ENCODE measurements at regions of chr17 and their contacts with region 1.

Region 1: GRCh38 chr17:59427425-59427921 is 96.0 kb downstream of the YPEL2 start:
- DNase-seq: no peak
- H3K4me3 ChIP-seq: no peak overlapping the region
- H3K27ac ChIP-seq: peak overlapping the region; percentile 76 to 90 (median 85)
- H3K4me1 ChIP-seq: peaks cover 0 to 70% (median 67%) of the 10 kb centered on the region in 4 donors
- H3K27me3 ChIP-seq: no peaks in the 10 kb centered on the region
- CTCF ChIP-seq: no peak
- EP300 ChIP-seq: no peak
- POLR2A ChIP-seq: no peak

Region 2: DNA sequence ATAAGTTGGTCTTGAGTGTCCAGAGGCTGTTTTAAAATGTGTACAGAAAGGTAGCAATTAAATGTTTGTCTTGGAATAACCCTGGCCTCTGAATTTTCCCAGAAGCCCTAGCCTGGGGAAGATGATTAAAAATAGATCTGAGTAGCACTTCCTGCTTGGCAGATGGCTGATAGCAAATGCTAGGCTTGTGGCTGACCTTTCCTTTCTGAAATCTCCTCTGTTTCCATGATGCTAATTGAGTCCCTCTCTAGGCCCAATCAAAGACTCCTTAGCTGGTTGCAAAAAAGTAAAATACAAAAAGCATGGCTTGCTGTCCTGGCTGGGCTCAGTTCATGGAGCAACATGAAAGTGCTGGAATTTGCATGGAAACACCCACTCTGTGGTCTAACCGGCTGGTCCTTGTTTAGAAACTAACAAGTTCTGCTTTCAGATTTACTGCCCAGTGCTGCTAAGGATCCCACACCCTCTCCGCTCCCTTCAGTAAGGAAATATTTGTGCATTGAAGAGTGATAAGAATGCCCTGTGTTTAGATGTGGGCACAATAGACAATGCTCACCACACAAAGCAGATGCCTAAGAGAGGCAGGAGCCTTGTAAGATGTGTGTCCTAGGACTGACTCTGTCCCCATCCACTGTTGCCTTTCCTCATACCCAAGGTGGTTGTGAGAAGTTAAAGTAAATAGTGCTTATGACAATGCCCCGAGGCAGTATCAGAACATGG is 55.2 kb before region 1 on chr17:
- intact Hi-C with region 1: loop called (anchors 5 kb)
- DNase-seq: peak; percentile 86
- H3K4me3 ChIP-seq: peak overlapping the region in 1 of 4 donors; percentile 3
- H3K27ac ChIP-seq: peak overlapping the region; percentile 87 to 95 (median 92)
- H3K4me1 ChIP-seq: peaks cover 0 to 100% (median 96%) of the 10 kb centered on the region in 4 donors
- H3K27me3 ChIP-seq: no peaks in the 10 kb centered on the region
- CTCF ChIP-seq: no peak
- EP300 ChIP-seq: peak in 2 of 4 donors; percentile 49 to 53
- POLR2A ChIP-seq: no peak

Region 3: GRCh38 chr17:59451706-59452105 is 24.2 kb after region 1 on chr17:
- intact Hi-C with region 1: no loop called
- DNase-seq: no peak
- H3K4me3 ChIP-seq: no peak overlapping the region
- H3K27ac ChIP-seq: no peak overlapping the region
- H3K4me1 ChIP-seq: no peaks in the 10 kb centered on the region
- H3K27me3 ChIP-seq: no peaks in the 10 kb centered on the region
- CTCF ChIP-seq: no peak
- EP300 ChIP-seq: no peak
- POLR2A ChIP-seq: no peak

Region 4: DNA sequence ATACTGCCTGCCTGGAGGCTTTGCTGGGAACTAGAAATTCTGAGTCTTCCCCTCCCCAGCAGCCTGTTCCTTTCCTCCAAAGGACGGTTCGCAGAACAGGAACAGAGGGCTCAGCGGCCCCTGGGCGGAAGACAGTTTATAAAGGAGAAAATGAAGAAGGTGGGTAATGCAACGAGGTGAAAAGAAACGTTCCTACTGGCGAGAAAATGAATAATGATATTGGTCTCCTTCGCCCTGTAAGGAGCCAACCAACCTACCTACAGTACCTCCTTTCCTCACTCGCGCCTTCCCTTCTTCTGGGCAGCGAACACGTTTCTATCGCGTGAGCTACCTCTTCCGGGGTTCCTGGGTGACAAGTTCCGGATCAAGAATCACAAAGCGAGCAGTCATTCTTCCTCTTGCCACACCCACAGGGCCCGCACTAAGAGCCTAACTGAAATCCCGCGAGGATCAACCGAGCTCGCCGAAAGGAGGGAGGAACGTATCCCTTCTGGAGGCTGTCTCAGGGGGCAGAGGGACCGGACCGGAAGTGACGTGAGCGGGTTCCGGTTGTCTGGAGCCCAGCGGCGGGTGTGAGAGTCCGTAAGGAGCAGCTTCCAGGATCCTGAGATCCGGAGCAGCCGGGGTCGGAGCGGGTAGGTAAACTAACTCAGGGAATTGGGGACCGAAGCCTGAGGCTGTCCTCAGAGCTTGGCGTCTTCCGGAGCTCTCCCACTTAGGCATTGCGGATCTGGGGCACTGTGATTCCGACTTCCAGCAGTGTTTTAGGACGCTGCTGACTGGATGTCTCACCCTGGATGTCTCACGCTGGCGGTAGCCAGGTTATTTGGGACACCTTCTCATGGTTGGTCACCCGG is 279.9 kb after region 1 on chr17 and contains the starts of genes PTRH2 and VMP1:
- intact Hi-C with region 1: no loop called
- DNase-seq: peak; percentile 99
- H3K4me3 ChIP-seq: peak within 1 kb of the TSS; percentile 64 to 86 (median 80)
- H3K27ac ChIP-seq: peak within 1 kb of the TSS; percentile 89 to 96 (median 92)
- H3K4me1 ChIP-seq: peaks cover 0 to 49% (median 37%) of the 10 kb centered on the region in 4 donors
- H3K27me3 ChIP-seq: no peaks in the 10 kb centered on the region
- CTCF ChIP-seq: no peak
- EP300 ChIP-seq: peak in 2 of 4 donors; percentile 2 to 63
- POLR2A ChIP-seq: peak; percentile 90 to 92
- total RNA-seq, gene PTRH2: 21.8 to 36.2 (median 24.1) TPM
- total RNA-seq, gene VMP1: 92.7 to 247 (median 139) TPM

Region 5: DNA sequence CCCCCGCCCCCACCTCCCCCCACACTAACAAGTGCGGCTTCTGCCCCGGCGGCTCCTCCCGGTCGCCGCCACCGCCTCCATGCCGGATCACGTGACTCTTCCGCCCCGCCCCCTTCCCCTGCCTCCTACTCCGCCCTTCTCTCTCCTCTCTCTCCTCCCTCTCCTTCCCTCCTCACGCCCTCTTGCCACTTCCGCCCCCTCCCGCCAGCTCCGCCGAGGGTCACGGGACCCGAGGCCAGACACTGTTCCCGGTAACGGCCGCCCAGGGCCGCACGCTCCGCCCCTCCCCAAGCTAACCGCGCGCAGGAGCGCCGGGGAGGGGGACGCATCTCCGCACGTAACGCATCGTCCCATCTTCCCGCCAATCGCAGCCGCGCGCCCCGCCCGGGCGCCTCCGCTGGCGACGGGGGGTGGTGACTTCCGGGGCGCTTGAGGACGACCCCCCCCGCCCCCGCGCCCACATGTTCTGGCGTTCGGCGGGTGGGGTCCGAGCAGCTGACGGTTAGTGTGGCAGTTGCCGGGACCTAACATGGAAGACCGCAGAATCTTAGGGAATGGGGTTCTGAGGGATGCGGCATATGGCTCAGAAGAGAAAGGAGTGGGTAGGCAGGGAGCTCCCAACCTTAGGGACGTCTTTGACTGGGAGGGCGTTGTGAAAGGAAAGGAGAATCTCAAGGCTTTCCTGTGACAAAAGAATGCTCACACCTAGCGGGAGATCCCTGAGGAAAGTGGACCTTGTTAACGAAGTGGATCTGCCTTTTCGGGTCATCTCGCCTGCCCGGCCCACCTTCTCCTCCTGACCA is 964.8 kb after region 1 on chr17 and contains the start of gene USP32:
- intact Hi-C with region 1: loop called (anchors 10 kb)
- DNase-seq: peak; percentile 99
- H3K4me3 ChIP-seq: peak within 1 kb of the TSS; percentile 72 to 93 (median 79)
- H3K27ac ChIP-seq: peak within 1 kb of the TSS; percentile 94 to 98 (median 95)
- H3K4me1 ChIP-seq: peaks cover 0 to 40% (median 34%) of the 10 kb centered on the region in 4 donors
- H3K27me3 ChIP-seq: no peaks in the 10 kb centered on the region
- CTCF ChIP-seq: peak in 2 of 4 experiments; percentile 15 to 18
- EP300 ChIP-seq: peak in 3 of 4 donors; percentile 36 to 91 (median 82)
- POLR2A ChIP-seq: peak; percentile 41 to 67
- total RNA-seq, gene USP32: 39.6 to 50.9 (median 44.1) TPM